GM12878 (cell line): ENCODE measurements at regions of chr18 and their contacts with region 1.

Region 1: GRCh38 chr18:22314420-22314819 is 103.3 kb downstream of the CTAGE1 start:
- DNase-seq: no peak
- ATAC-seq: no peak
- H3K4me3 ChIP-seq: no peak overlapping the region
- H3K27ac ChIP-seq: no peak overlapping the region
- H3K4me1 ChIP-seq: no peaks in the 10 kb centered on the region
- H3K27me3 ChIP-seq: peaks cover 0 to 1% of the 10 kb centered on the region in 2 experiments; a peak in 1 of 4 replicates
- CTCF ChIP-seq: no peak
- EP300 ChIP-seq: no peak
- POLR2A ChIP-seq: no peak
- RAD21 ChIP-seq: no peak

Region 2: GRCh38 chr18:22032392-22032961 is 281.9 kb before region 1 on chr18:
- CTCF ChIA-PET with region 1: no interaction called
- POLR2A ChIA-PET with region 1: no interaction called
- RAD21 ChIA-PET with region 1: no interaction called
- SMC1A ChIA-PET with region 1: no interaction called
- in situ Hi-C with region 1: no loop called
- intact Hi-C with region 1: no loop called
- DNase-seq: peak; percentile 4
- ATAC-seq: no peak
- H3K4me3 ChIP-seq: no peak overlapping the region
- H3K27ac ChIP-seq: no peak overlapping the region
- H3K4me1 ChIP-seq: no peaks in the 10 kb centered on the region
- H3K27me3 ChIP-seq: no peaks in the 10 kb centered on the region
- CTCF ChIP-seq: no peak
- EP300 ChIP-seq: no peak
- POLR2A ChIP-seq: no peak
- RAD21 ChIP-seq: no peak

Region 3: DNA sequence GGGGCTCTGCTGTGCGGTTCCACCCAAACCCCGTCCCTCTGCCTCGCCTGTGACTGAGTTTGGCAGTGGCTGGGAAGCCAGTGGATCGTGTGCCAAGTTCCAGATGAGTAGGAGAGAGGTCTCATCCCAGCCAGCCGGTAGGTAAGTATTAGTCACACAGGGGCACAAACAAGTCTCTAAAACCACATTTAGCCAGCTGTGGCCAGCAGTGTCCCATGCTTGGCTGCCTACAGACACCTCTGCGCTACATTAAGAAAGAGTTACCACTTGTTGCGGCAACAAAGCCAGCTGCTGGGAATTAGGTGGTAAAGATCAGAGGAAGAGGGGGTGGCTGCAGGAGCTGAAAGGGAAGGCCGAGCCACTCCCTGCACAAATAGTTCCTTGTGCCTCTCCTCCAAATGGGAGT is 63.8 kb before region 1 on chr18:
- CTCF ChIA-PET with region 1: no interaction called
- POLR2A ChIA-PET with region 1: no interaction called
- RAD21 ChIA-PET with region 1: no interaction called
- SMC1A ChIA-PET with region 1: no interaction called
- in situ Hi-C with region 1: no loop called
- intact Hi-C with region 1: loop called (anchors 10 kb)
- DNase-seq: no peak
- ATAC-seq: no peak
- H3K4me3 ChIP-seq: no peak overlapping the region
- H3K27ac ChIP-seq: no peak overlapping the region
- H3K4me1 ChIP-seq: no peaks in the 10 kb centered on the region
- H3K27me3 ChIP-seq: no peaks in the 10 kb centered on the region
- CTCF ChIP-seq: no peak
- EP300 ChIP-seq: no peak
- POLR2A ChIP-seq: no peak
- RAD21 ChIP-seq: no peak

Region 4: DNA sequence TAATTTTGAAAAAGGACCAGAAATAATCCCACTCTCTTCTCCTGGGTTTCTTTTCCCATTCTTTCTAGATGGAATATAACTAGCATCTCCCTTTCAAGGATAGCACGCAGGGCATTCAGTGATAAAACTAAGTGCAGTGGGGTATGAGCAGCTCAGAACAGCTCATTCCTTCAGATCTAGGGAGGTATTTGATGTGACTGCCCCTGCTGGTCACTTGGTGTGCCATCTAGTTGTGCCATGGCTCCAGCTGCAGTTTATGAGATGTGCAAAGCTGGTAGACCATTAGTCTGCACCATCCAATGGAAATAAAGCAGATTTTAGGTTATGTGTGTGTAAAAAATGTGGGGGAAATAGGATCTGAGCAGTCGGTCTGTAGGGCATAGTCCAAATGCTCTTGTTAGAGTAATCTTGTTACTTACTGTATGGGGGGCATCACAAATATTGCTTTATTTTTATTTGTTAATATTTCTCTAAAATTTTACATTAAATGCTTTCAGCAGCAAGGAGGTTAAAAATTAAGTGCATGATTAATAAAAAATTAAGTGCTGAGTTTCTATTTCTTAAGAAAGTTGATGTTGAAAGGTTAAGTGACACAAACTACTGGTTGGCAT is 64.4 kb after region 1 on chr18:
- CTCF ChIA-PET with region 1: no interaction called
- POLR2A ChIA-PET with region 1: no interaction called
- RAD21 ChIA-PET with region 1: no interaction called
- SMC1A ChIA-PET with region 1: no interaction called
- in situ Hi-C with region 1: no loop called
- intact Hi-C with region 1: loop called (anchors 10 kb)
- DNase-seq: no peak
- ATAC-seq: peak; percentile 74
- H3K4me3 ChIP-seq: no peak overlapping the region
- H3K27ac ChIP-seq: no peak overlapping the region
- H3K4me1 ChIP-seq: no peaks in the 10 kb centered on the region
- H3K27me3 ChIP-seq: no peaks in the 10 kb centered on the region; a peak in 1 of 4 replicates
- CTCF ChIP-seq: peak; percentile 18 to 40 (median 25); a peak in 2 of 6 replicates
- EP300 ChIP-seq: no peak
- POLR2A ChIP-seq: no peak
- RAD21 ChIP-seq: no peak

Region 5: DNA sequence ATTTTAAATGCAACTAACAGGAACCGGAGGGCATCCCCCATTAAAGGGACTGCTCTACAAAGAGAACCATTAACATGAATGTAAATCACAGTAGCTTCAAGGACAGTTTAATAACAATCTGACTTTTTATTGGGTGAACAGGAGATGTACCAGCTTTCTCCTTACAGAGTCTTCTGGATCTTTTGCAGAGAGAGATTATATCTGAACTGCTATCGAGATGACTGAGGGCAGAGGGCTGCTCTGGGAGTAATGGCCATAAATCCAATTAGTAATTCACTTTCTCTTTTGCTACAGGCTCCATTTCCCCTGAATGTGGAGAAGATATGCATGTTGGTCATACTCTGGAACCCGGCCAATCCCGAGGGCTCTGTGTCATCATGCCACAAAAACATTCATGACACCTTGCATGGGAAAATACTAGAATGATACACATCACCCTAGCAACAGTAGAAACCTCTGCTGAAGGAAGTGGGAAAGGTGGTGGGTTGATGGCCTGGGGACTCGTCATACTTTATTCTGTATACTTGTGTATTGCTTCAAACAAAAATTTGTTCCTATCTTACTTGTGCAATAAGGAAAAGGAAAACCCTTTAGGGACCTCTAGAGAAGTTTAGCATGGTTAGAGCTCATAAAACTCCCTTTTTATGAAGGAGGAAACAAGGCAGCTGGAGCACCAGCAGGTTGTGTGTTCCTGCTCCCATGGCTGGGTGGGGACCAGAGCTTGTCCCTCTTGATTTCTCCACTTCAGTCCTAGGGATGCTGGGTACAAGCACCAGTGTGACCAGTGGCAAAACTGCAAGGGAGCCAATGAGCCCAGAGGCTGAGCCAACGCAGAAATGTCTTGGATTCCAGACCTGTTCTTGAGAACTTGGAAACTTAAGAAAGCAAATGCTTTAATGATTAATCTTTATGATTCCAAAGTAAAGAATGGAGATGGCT is 77.3 kb after region 1 on chr18:
- CTCF ChIA-PET with region 1: no interaction called
- POLR2A ChIA-PET with region 1: no interaction called
- RAD21 ChIA-PET with region 1: no interaction called
- SMC1A ChIA-PET with region 1: no interaction called
- in situ Hi-C with region 1: no loop called
- intact Hi-C with region 1: no loop called
- DNase-seq: no peak
- ATAC-seq: no peak
- H3K4me3 ChIP-seq: no peak overlapping the region
- H3K27ac ChIP-seq: no peak overlapping the region
- H3K4me1 ChIP-seq: no peaks in the 10 kb centered on the region
- H3K27me3 ChIP-seq: no peaks in the 10 kb centered on the region
- CTCF ChIP-seq: no peak
- EP300 ChIP-seq: no peak
- POLR2A ChIP-seq: no peak
- RAD21 ChIP-seq: no peak